AG04450 (cell line): ENCODE measurements at regions of chr5 and their contacts with region 1.

Region 1: DNA sequence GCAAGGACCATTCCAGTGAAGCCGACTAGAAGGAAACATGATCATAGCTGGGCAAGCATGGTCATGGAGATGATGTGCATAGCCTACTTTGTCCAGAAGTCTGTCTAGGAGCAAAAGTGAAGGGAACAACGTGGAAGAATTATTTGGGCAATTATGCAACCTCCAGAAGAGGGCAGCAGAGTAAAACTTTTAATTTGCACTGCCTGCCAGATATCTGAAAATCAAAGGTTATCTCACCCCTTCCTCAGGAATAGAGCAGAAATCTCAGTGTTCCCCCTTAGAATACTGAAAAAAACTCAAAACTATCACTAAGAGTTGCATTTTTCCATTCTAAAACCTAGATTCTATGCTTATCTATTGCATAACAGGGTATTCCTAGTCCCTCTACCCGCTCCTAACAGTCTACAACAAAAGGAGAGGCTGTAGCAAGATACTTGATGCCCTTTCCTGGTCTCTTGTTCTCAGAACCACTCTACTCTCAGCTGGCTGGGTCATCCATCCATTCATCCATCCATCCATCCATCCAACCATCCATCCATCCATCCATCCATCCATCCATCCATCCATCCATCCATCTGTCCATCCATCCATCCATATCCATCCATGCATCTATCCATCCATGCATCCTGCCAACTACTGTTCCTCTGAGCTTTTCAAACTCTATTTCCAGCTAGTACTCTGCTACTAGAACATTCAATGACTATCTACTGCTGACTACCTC is 8.4 kb upstream of the SETD9 start:
- DNase-seq: no peak
- H3K4me3 ChIP-seq: no peak overlapping the region
- H3K27ac ChIP-seq: no peak overlapping the region
- H3K27me3 ChIP-seq: no peaks in the 10 kb centered on the region
- CTCF ChIP-seq: peak; percentile 64

Region 2: DNA sequence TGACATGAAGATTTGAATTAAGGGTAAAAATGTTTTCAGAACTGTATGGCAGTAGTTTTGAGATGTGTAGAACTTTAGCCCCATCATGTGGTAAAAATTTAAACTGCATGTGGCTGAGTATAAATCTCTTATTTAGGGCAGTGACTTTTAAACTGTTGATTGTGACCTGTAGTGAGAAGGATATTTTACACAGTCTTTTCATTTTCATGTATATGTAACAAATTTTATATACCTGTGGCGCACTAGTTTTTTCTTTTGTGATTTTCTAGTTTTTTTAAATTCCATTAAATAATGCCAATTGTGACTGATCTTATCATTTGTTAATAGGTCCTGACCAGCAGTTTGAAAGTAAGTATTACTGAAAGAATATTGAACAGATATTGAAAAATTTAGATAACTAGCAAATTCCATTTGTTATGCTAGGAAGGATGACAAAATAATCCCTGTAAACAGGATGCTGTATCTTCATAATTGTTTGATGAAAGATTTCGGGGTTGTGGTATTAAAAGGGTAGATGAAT is 320.1 kb after region 1 on chr5:
- CTCF ChIA-PET with region 1: interaction called, 11 read pairs
- POLR2A ChIA-PET with region 1: no interaction called
- DNase-seq: no peak
- H3K4me3 ChIP-seq: no peak overlapping the region
- H3K27ac ChIP-seq: no peak overlapping the region
- H3K27me3 ChIP-seq: no peaks in the 10 kb centered on the region
- CTCF ChIP-seq: peak; percentile 81

Region 3: DNA sequence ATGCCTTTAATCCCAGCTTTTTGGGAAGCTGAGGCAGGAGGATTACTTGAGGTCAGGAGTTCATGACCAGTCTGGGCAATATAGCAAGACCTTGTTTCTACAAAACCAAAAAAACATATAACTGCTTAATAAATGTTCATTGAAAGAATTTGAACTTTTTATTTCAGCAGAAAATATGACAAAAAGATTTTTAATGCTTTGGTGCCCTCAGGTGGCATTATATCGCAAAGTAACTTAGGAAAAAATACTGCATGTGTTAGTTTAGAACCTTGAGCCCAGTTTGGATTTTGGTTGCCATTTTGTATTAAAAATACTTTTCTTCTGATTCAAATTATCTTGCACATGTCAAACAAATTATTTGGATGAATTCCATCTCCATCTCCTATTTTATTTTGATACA is 376.1 kb after region 1 on chr5:
- CTCF ChIA-PET with region 1: interaction called, 13 read pairs
- POLR2A ChIA-PET with region 1: no interaction called
- DNase-seq: no peak
- H3K4me3 ChIP-seq: no peak overlapping the region
- H3K27ac ChIP-seq: no peak overlapping the region
- H3K27me3 ChIP-seq: peaks cover 3% of the 10 kb centered on the region
- CTCF ChIP-seq: peak; percentile 38